ENCODE measurements at regions of chr18 and their contacts with region 1.

Region 1: DNA sequence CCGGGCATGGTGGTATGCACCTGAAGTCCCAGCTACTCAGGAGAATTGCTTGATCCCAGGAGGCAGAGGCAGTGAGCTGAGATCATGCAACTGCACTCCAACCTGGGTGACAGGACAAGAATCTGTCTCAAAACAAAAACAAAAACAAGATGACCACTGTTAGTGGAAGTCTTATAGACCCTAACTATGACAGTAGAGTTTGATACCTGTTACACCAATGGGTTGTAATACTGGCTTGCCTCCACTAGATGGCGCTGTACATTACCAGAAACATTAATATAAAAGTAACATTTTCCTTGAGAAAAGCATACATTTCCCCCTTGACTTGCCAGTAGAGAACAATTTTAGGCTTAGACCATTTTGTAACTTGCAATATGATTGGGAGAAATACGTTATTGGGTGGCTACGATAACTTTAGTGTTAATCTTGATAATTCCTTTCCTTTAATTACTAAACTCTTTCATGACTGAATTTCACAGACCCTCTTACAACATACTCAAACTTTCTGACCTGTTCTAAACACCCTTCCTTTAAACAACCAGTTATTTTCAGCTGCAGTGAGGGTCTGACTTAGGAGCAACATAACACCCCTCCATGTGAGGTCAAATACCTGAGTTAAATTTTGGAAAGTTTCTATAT is 19.5 kb downstream of the SLC25A52 start:
- DNase-seq: peak in 1 of 2 donors; percentile 70
- H3K4me3 ChIP-seq: no peak overlapping the region
- H3K27ac ChIP-seq: no peak overlapping the region
- H3K4me1 ChIP-seq: no peaks in the 10 kb centered on the region
- H3K27me3 ChIP-seq: no peaks in the 10 kb centered on the region
- CTCF ChIP-seq: peak; percentile 49 to 83 (median 78)

Region 2: GRCh38 chr18:31634331-31634713 is 106.9 kb before region 1 on chr18:
- intact Hi-C with region 1: no loop called
- DNase-seq: no peak
- H3K4me3 ChIP-seq: no peak overlapping the region
- H3K27ac ChIP-seq: no peak overlapping the region
- H3K4me1 ChIP-seq: no peaks in the 10 kb centered on the region
- H3K27me3 ChIP-seq: no peaks in the 10 kb centered on the region
- CTCF ChIP-seq: no peak

Region 3: DNA sequence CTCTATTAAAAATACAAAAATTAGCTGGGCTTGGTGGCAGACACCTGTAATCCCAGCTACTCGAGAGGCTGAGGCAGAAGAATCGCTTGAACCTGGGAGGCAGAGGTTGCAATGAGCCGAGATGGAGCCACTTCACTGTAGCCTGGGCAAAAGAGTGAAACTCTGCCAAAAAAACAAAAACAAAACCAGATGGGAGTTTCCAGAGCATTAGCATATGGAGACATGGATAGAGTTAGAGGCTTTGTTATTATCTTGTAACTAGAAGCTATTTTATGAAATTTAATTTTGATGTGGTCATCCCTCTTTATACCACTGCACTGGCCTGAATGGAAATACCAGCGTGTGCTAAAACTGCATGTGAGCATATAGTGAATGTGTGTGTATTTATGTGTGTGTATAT is 142.8 kb after region 1 on chr18:
- intact Hi-C with region 1: no loop called
- DNase-seq: no peak
- H3K4me3 ChIP-seq: no peak overlapping the region
- H3K27ac ChIP-seq: no peak overlapping the region
- H3K4me1 ChIP-seq: no peaks in the 10 kb centered on the region
- H3K27me3 ChIP-seq: no peaks in the 10 kb centered on the region
- CTCF ChIP-seq: no peak

Region 4: DNA sequence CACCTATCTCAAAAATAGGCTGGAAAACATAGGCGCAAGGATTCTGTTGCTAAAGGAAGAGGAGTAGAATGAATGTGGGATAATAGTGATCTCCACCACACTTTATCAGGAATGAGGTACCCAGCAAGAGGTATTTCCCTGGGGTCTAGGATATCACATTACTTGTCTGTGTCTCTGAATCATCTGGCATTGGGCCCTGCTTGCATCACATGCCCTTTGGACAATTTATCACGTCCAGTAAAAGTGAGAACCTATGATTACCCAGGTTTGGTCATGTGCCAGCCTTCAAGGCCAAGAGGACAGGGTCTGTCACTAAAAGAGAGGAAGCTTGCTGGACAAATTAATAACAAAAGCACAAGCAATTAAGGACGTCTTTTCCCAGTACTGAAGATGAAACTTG is 213.1 kb after region 1 on chr18:
- intact Hi-C with region 1: loop called (anchors 10 kb)
- DNase-seq: no peak
- H3K4me3 ChIP-seq: no peak overlapping the region
- H3K27ac ChIP-seq: no peak overlapping the region
- H3K4me1 ChIP-seq: no peaks in the 10 kb centered on the region
- H3K27me3 ChIP-seq: no peaks in the 10 kb centered on the region
- CTCF ChIP-seq: no peak